ENCODE measurements at regions of chr15 and their contacts with region 1.

Region 1: DNA sequence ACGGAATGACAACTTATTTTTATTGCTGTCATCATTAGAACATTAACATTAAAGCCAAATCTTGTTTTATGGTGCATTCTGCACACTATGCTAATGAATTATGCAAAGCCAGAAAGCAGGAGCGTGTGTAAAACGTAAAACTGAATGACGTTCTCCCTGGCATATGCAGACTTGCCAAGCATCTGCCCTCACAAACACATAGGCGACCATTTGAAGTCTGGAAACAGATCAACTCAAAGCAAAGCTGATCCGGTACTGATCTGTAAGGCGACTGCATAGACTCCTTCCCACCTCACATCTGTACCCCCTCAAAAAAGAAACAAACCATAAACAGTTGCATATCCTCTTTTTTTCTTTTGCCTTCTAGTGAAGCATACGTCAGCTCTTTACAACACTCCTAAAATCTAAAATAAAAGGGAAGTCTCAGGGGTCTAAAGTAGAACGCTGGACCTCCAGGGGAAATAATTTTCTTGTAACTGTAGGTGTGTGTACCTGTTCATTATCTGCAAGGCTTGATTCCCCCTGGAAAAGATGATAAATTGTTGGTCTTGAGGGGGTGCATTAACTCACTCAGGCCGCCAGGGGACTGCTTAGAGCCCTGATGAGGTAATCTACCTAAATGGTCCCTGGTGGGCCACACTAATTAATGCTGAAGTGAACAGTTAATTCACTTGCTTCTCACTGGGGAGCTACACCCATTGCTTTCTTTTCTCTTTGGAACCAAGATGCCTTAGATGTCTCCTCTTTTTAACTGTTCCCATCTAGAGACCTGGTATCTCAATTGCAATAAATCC is 231.4 kb downstream of the CDIN1 start:
- DNase-seq: no peak
- H3K4me3 Mint-ChIP-seq: no peak overlapping the region
- H3K27ac Mint-ChIP-seq: no peak overlapping the region
- H3K4me1 Mint-ChIP-seq: no peaks in the 10 kb centered on the region
- H3K27me3 Mint-ChIP-seq: no peaks in the 10 kb centered on the region

Region 2: DNA sequence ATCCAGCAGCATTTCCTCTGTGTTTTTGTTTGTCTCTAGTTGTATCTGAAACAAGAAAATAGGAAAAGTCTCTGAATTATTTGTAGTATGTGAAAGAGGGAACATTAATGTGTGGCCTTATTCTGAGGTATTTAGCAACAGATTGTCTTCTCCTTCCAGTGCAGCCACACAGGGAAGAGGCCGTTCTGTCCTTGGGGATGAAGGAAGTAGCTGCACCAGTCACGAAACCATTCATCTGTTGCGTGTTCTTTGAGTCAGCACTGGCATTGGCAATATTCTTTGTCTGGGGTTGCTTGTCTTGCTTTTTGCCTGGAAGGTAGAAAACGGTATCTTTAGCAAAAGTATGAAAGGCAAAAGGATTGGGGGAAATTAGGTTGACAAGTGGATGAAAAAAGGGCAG is 139.8 kb before region 1 on chr15:
- CTCF ChIA-PET with region 1: no interaction called
- POLR2A ChIA-PET with region 1: no interaction called
- DNase-seq: no peak
- H3K4me3 Mint-ChIP-seq: no peak overlapping the region
- H3K27ac Mint-ChIP-seq: no peak overlapping the region
- H3K4me1 Mint-ChIP-seq: no peaks in the 10 kb centered on the region
- H3K27me3 Mint-ChIP-seq: no peaks in the 10 kb centered on the region

Region 3: DNA sequence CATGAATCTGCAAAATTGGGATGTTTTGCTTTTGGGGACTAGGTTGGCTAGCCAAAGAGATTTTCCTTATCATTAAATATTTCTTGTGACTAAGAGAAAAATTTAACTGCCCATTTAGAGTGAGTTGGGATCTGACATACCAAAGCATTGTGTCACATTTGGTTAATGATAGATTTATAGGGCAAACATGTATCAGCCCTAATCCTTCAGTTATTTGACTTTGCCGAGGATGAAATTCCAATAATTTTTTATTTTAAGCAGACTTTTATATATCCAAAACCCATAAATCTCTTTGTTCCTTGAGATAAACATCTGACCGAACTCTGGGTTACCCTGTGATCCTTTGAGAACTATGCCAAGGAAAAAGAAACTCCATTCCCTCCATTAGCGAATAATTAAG is 12.5 kb before region 1 on chr15:
- CTCF ChIA-PET with region 1: no interaction called
- POLR2A ChIA-PET with region 1: no interaction called
- DNase-seq: no peak
- H3K4me3 Mint-ChIP-seq: no peak overlapping the region
- H3K27ac Mint-ChIP-seq: no peak overlapping the region
- H3K4me1 Mint-ChIP-seq: no peaks in the 10 kb centered on the region
- H3K27me3 Mint-ChIP-seq: no peaks in the 10 kb centered on the region

Region 4: GRCh38 chr15:36858423-36858822 is 47.6 kb after region 1 on chr15:
- CTCF ChIA-PET with region 1: no interaction called
- POLR2A ChIA-PET with region 1: interaction called, 12 read pairs
- DNase-seq: no peak
- H3K4me3 Mint-ChIP-seq: no peak overlapping the region
- H3K27ac Mint-ChIP-seq: no peak overlapping the region
- H3K4me1 Mint-ChIP-seq: no peaks in the 10 kb centered on the region
- H3K27me3 Mint-ChIP-seq: no peaks in the 10 kb centered on the region